SK-N-SH (cell line): ENCODE measurements at regions of chr16 and their contacts with region 1.

Region 1: DNA sequence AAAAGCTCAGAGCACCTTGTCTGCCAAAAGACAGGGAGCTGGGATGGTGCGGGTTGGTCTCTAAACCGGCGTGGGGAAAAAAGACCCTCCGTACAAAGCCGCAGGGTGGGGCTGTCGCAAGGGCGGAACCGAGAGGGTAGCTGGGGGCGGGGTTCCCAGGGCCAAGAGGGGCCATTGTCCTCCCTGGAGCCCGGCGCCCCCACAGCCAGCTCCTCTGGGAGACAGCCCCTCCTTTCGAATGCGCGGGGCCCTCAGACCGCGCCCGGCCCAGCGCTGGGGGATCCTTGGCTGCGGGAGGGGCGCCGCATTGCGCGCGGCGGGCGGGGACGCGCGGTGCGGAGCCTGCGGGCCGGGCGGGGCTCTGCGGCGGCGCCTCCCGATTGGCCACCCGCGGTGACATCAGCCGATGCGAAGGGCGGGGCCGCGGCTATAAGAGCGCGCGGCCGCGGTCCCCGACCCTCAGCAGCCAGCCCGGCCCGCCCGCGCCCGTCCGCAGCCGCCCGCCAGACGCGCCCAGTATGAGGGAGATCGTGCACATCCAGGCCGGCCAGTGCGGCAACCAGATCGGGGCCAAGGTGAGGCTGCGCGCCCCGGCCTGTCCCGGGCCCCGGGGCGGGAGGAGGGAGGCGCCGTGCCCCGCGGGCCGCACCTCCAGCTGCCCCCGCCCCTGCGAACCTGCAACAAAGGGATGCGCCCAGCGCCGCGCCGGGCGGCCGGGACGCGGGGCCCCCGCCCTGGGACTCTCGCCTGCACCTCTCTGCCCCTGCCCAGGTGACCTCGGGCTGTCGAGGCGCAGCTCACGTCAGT is at the start of gene TUBB3:
- DNase-seq: peak; percentile 97
- H3K4me3 ChIP-seq: peak within 1 kb of the TSS; percentile 83 to 89
- H3K27ac ChIP-seq: peak within 1 kb of the TSS; percentile 97 to 100
- H3K4me1 ChIP-seq: peaks cover 12 to 43% of the 10 kb centered on the region in 2 experiments; a peak in 3 of 4 replicates
- H3K27me3 ChIP-seq: no peaks in the 10 kb centered on the region
- CTCF ChIP-seq: peak; percentile 19
- EP300 ChIP-seq: no peak; a peak in 1 of 4 replicates
- RAD21 ChIP-seq: no peak
- polyA plus RNA-seq, gene TUBB3: 375 and 428 TPM in 2 replicates

Region 2: GRCh38 chr16:89613231-89613953 is 309.7 kb before region 1 on chr16 and contains the start of gene DPEP1:
- CTCF ChIA-PET with region 1: no interaction called
- POLR2A ChIA-PET with region 1: no interaction called
- DNase-seq: no peak
- H3K4me3 ChIP-seq: no peak within 1 kb of the TSS
- H3K27ac ChIP-seq: no peak within 1 kb of the TSS
- H3K4me1 ChIP-seq: peaks cover 0 to 5% of the 10 kb centered on the region in 2 experiments; a peak in 1 of 4 replicates
- H3K27me3 ChIP-seq: no peaks in the 10 kb centered on the region
- CTCF ChIP-seq: no peak
- EP300 ChIP-seq: no peak
- RAD21 ChIP-seq: no peak
- polyA plus RNA-seq, gene DPEP1: 0.05 TPM in 1 of 2 replicates, not detected in the other

Region 3: DNA sequence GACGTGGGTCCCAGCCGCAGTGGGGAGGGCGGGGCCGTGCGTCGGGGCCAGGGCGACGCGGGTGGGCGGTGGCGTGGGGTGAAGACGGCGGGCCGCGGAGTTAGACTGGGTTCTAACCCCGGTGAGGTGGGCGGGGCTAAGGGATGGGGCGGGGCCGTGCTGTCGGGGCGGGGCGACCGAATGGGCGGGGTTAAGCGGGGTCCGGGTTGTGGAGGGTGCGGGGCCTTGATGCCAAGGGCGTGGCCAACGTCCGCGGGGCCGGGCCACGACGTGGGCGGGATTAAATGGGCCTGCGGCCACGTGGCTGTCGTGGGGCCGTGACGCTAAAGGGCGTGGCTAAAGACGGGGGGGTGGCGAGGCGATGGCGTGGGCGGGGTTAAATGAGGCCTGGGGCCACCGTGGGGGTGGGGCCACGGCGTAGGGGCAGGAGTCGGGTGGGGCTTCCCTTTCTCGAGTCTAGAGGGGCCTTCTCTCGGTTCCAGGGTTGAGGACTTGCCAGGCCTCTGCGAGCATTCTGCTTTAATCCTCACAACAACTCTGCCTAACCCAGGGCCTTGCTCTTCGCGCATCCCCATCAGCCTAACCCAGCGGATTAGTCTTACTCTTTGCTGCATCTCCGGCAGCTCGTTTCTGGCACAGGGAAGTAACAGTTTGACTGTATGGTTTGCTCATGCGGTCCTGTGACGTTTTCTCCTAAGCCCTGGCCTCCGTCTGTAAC is 49.0 kb before region 1 on chr16:
- CTCF ChIA-PET with region 1: interaction called, 5 read pairs
- POLR2A ChIA-PET with region 1: interaction called, 15 read pairs
- DNase-seq: peak; percentile 98
- H3K4me3 ChIP-seq: peak overlapping the region; percentile 81 to 98
- H3K27ac ChIP-seq: peak overlapping the region; percentile 99 to 100
- H3K4me1 ChIP-seq: peaks cover 11 to 13% of the 10 kb centered on the region in 2 experiments
- H3K27me3 ChIP-seq: no peaks in the 10 kb centered on the region
- CTCF ChIP-seq: no peak
- EP300 ChIP-seq: no peak
- RAD21 ChIP-seq: no peak

Region 4: GRCh38 chr16:89909777-89910716 is 13.0 kb before region 1 on chr16:
- CTCF ChIA-PET with region 1: interaction called, 53 read pairs
- POLR2A ChIA-PET with region 1: interaction called, 14 read pairs
- DNase-seq: peak; percentile 92
- H3K4me3 ChIP-seq: peak overlapping the region in 1 of 2 experiments; percentile 42; a peak in 1 of 4 replicates
- H3K27ac ChIP-seq: no peak overlapping the region; a peak in 1 of 4 replicates
- H3K4me1 ChIP-seq: peaks cover 0 to 3% of the 10 kb centered on the region in 2 experiments; a peak in 1 of 4 replicates
- H3K27me3 ChIP-seq: no peaks in the 10 kb centered on the region
- CTCF ChIP-seq: peak; percentile 86
- EP300 ChIP-seq: no peak
- RAD21 ChIP-seq: peak; percentile 59

Region 5: GRCh38 chr16:89934611-89935553 is 11.8 kb after region 1 on chr16:
- CTCF ChIA-PET with region 1: interaction called, 4 read pairs
- POLR2A ChIA-PET with region 1: interaction called, 11 read pairs
- DNase-seq: no peak
- H3K4me3 ChIP-seq: peak overlapping the region in 1 of 2 experiments; percentile 22; a peak in 1 of 4 replicates
- H3K27ac ChIP-seq: peak overlapping the region in 1 of 2 experiments; percentile 12; a peak in 1 of 4 replicates
- H3K4me1 ChIP-seq: no peaks in the 10 kb centered on the region
- H3K27me3 ChIP-seq: no peaks in the 10 kb centered on the region
- CTCF ChIP-seq: no peak
- EP300 ChIP-seq: no peak
- RAD21 ChIP-seq: no peak

Region 6: GRCh38 chr16:89972244-89973234 is 49.5 kb after region 1 on chr16:
- CTCF ChIA-PET with region 1: interaction called, 4 read pairs
- POLR2A ChIA-PET with region 1: interaction called, 24 read pairs
- DNase-seq: peak; percentile 100
- H3K4me3 ChIP-seq: peak overlapping the region; percentile 76 to 100
- H3K27ac ChIP-seq: peak overlapping the region; percentile 73 to 94
- H3K4me1 ChIP-seq: peaks cover 7 to 23% of the 10 kb centered on the region in 2 experiments; a peak in 3 of 4 replicates
- H3K27me3 ChIP-seq: no peaks in the 10 kb centered on the region
- CTCF ChIP-seq: no peak
- EP300 ChIP-seq: peak in 1 of 2 experiments; percentile 17; a peak in 1 of 4 replicates
- RAD21 ChIP-seq: no peak

Region 7: DNA sequence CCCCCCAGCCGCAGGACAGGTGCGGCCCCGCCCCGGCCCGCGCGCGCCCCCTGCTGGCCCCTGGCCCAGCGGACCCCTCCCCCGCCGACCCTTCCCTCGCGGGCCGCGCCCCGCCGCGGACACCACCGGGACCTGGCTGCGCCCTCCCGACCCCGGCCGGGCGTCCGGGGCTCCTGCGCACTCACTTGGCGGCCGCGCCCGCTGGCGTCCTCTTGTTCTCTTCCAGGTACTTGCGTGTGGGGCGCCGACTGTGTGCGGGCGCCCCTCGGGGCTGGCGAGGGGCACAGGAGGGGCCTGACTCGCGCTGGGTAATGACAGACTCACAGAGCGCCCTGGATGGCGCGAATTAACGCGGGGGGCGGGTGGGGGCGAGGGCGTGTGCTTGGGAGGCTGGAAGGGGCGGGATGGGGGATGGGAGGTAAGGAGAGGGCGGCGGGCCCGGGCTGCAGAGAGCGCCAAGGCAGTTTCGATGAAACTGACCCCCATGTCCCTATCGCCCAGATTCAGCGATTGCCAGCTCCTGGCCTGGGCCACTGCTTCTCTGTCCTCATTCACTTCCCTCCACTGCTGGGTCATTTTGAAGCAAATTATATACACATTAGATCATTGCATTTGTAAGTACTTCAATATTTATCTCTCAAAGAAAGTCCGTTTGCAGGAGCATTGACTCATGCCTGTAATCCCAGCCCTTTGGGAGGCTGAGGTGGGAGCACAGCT is 96.6 kb after region 1 on chr16:
- CTCF ChIA-PET with region 1: interaction called, 13 read pairs
- POLR2A ChIA-PET with region 1: interaction called, 11 read pairs
- DNase-seq: peak; percentile 94
- H3K4me3 ChIP-seq: peak overlapping the region; percentile 72 to 77
- H3K27ac ChIP-seq: peak overlapping the region; percentile 62 to 88
- H3K4me1 ChIP-seq: peaks cover 20 to 39% of the 10 kb centered on the region in 2 experiments
- H3K27me3 ChIP-seq: no peaks in the 10 kb centered on the region
- CTCF ChIP-seq: peak; percentile 52
- EP300 ChIP-seq: 0 out of 4 replicates have a peak, but pooled peaks of 1 of the 2 experiments have one; percentile 7
- RAD21 ChIP-seq: no peak

Region 8: DNA sequence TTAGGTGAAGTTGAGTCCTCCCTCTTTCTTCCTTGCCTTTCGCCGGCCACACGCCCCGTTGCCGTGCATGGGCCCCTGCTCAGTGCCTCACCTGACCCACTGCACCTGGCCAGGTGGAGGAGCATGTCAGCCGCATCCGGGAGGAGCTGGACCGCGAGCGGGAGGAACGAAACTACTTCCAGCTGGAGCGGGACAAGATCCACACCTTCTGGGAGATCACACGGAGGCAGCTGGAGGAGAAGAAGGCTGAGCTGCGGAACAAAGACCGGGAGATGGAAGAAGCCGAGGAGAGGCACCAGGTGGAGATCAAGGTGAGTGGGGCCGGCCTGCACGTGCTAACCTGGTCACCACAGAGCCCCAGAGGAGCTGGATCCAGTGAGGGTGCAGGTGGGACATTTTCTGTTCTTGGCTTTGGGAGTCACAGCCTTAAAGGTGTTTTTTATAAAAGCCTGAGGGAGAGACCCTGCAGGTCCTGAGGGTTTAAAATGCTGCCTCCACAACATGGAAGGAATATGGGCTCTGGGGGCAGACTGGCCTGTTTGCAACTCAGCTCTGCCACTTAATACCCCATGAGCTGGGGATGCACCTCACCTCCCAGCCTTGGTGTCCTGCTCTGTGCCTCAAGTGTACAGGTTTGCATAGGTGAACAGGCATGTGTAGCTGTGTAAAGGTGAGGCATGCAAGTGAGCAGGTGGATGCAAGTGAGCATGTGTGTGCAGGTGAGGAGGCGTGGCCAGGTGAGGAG is 108.3 kb after region 1 on chr16:
- CTCF ChIA-PET with region 1: no interaction called
- POLR2A ChIA-PET with region 1: no interaction called
- DNase-seq: no peak
- H3K4me3 ChIP-seq: no peak overlapping the region
- H3K27ac ChIP-seq: no peak overlapping the region
- H3K4me1 ChIP-seq: no peaks in the 10 kb centered on the region
- H3K27me3 ChIP-seq: no peaks in the 10 kb centered on the region
- CTCF ChIP-seq: no peak
- EP300 ChIP-seq: no peak
- RAD21 ChIP-seq: no peak